Activated T-helper 1 cell treated with anti-CD3 and anti-CD28 coated beads, Interleukin-12 subunit alpha, Interleukin-12 subunit beta, Interleukin-2, Interleukin-4 antibody, amounts not matched to agents 30 ng/mL and 10 ng/mL and 1 ng/mL, durations not matched to agents 14 hours and 24 hours and 36 hours (primary cell): ENCODE measurements at regions of chr3 and their contacts with region 1.

Region 1: GRCh38 chr3:111595232-111595631 is at the start of gene ZBED2:
- DNase-seq: no peak
- H3K4me3 Mint-ChIP-seq: peak within 1 kb of the TSS; percentile 97
- H3K27ac Mint-ChIP-seq: peak within 1 kb of the TSS; percentile 99
- H3K4me1 Mint-ChIP-seq: peaks cover 65% of the 10 kb centered on the region
- H3K27me3 Mint-ChIP-seq: no peaks in the 10 kb centered on the region
- total RNA-seq, gene ZBED2: 812 and 827 TPM in 2 replicates

Region 2: GRCh38 chr3:109806929-109807328 is 1788.3 kb before region 1 on chr3:
- intact Hi-C with region 1: loop called (anchors 5 kb)
- DNase-seq: peak; percentile 30
- H3K4me3 Mint-ChIP-seq: peak overlapping the region; percentile 35
- H3K27ac Mint-ChIP-seq: peak overlapping the region; percentile 67
- H3K4me1 Mint-ChIP-seq: peaks cover 39% of the 10 kb centered on the region
- H3K27me3 Mint-ChIP-seq: peaks cover 8% of the 10 kb centered on the region

Region 3: GRCh38 chr3:111531446-111531845 is 63.8 kb before region 1 on chr3:
- intact Hi-C with region 1: no loop called
- DNase-seq: no peak
- H3K4me3 Mint-ChIP-seq: no peak overlapping the region
- H3K27ac Mint-ChIP-seq: no peak overlapping the region
- H3K4me1 Mint-ChIP-seq: peaks cover 12% of the 10 kb centered on the region
- H3K27me3 Mint-ChIP-seq: peaks cover 2% of the 10 kb centered on the region

Region 4: GRCh38 chr3:111616417-111617105 is 21.3 kb after region 1 on chr3:
- intact Hi-C with region 1: loop called (anchors 1 kb)
- DNase-seq: peak; percentile 61
- H3K4me3 Mint-ChIP-seq: peak overlapping the region; percentile 70
- H3K27ac Mint-ChIP-seq: peak overlapping the region; percentile 98
- H3K4me1 Mint-ChIP-seq: peaks cover 84% of the 10 kb centered on the region
- H3K27me3 Mint-ChIP-seq: no peaks in the 10 kb centered on the region